Activated CD4-positive, alpha-beta T cell treated with anti-CD3 and anti-CD28 coated beads for 36 hours (primary cell): ENCODE measurements at regions of chr2 and their contacts with region 1.

Region 1: DNA sequence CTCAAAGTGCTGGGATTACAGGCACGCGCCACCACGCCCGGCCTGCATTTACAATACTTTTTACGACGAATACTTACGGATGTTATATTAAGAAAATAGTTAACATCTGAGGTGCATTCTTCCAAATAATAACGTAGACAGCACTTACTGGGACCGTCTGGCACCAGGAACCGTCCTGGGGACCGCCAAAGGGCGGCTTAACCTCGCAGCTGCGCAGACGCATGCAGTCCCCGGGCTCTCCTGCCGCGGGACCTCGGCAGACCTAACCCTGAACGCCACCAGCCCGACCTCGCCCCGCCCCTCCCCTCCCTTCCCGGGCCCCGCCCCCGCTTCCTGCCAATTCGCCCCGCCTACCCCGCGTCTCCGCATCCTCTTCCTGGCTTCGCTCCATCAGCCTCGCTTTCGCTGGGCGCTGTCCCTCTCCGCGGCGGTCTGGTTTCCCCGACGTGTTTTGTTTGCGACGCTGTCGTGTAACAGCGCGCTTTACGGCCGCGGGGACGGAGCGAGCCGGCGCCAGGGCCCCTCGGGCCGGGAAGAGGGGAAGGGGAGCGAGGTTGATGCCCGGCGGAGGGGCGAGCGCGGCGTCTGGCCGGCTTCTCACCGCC is at the start of gene CNOT11:
- DNase-seq: peak; percentile 100
- ATAC-seq: peak; percentile 88
- H3K4me3 Mint-ChIP-seq: peak within 1 kb of the TSS; percentile 90
- H3K27ac Mint-ChIP-seq: peak within 1 kb of the TSS; percentile 95
- H3K4me1 Mint-ChIP-seq: peaks cover 42% of the 10 kb centered on the region
- H3K27me3 Mint-ChIP-seq: no peaks in the 10 kb centered on the region
- total RNA-seq, gene CNOT11: 57.9 to 106 TPM

Region 2: DNA sequence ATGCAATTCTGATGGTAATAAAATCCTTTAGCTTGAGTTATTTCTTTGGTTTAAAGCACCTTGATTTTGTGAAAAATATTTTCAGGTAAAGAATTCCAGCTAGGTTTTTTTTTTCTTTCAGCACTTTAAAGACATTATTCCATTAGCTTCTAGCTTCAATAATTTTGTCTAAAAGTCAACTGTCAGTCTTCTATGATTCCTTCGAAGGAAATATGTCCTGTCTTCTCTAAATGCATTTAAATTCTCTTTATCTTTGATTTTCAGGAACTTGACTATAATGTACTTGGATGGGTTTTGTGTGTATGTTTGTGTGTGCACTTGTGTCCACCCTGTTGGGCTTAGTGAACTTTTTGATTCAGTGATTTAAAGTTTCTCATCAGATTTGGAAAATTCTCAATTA is 934.9 kb before region 1 on chr2:
- CTCF ChIA-PET with region 1: no interaction called
- POLR2A ChIA-PET with region 1: no interaction called
- intact Hi-C with region 1: no loop called
- DNase-seq: no peak
- ATAC-seq: no peak
- H3K4me3 Mint-ChIP-seq: no peak overlapping the region
- H3K27ac Mint-ChIP-seq: no peak overlapping the region
- H3K4me1 Mint-ChIP-seq: no peaks in the 10 kb centered on the region
- H3K27me3 Mint-ChIP-seq: peaks cover 38% of the 10 kb centered on the region

Region 3: GRCh38 chr2:100562732-100563720 is 689.5 kb before region 1 on chr2 and contains the start of gene PDCL3:
- CTCF ChIA-PET with region 1: no interaction called
- POLR2A ChIA-PET with region 1: no interaction called
- intact Hi-C with region 1: loop called in 1 of 2 experiments (anchors 1 kb)
- DNase-seq: peak; percentile 96
- ATAC-seq: peak; percentile 96
- H3K4me3 Mint-ChIP-seq: peak within 1 kb of the TSS; percentile 85
- H3K27ac Mint-ChIP-seq: peak within 1 kb of the TSS; percentile 97
- H3K4me1 Mint-ChIP-seq: peaks cover 26% of the 10 kb centered on the region
- H3K27me3 Mint-ChIP-seq: no peaks in the 10 kb centered on the region
- total RNA-seq, gene PDCL3: 39.3 to 41.9 TPM

Region 4: GRCh38 chr2:101012706-101013181 is 239.8 kb before region 1 on chr2:
- CTCF ChIA-PET with region 1: interaction called, 5 read pairs
- POLR2A ChIA-PET with region 1: no interaction called
- intact Hi-C with region 1: loop called in 1 of 2 experiments (anchors 1 kb)
- DNase-seq: peak; percentile 49
- ATAC-seq: no peak
- H3K4me3 Mint-ChIP-seq: no peak overlapping the region
- H3K27ac Mint-ChIP-seq: peak overlapping the region; percentile 55
- H3K4me1 Mint-ChIP-seq: peaks cover 31% of the 10 kb centered on the region
- H3K27me3 Mint-ChIP-seq: no peaks in the 10 kb centered on the region

Region 5: GRCh38 chr2:101238930-101239759 is 13.4 kb before region 1 on chr2:
- CTCF ChIA-PET with region 1: interaction called, 10 read pairs
- POLR2A ChIA-PET with region 1: no interaction called
- intact Hi-C with region 1: no loop called
- DNase-seq: no peak
- ATAC-seq: no peak
- H3K4me3 Mint-ChIP-seq: no peak overlapping the region
- H3K27ac Mint-ChIP-seq: no peak overlapping the region
- H3K4me1 Mint-ChIP-seq: peaks cover 6% of the 10 kb centered on the region
- H3K27me3 Mint-ChIP-seq: no peaks in the 10 kb centered on the region

Region 6: DNA sequence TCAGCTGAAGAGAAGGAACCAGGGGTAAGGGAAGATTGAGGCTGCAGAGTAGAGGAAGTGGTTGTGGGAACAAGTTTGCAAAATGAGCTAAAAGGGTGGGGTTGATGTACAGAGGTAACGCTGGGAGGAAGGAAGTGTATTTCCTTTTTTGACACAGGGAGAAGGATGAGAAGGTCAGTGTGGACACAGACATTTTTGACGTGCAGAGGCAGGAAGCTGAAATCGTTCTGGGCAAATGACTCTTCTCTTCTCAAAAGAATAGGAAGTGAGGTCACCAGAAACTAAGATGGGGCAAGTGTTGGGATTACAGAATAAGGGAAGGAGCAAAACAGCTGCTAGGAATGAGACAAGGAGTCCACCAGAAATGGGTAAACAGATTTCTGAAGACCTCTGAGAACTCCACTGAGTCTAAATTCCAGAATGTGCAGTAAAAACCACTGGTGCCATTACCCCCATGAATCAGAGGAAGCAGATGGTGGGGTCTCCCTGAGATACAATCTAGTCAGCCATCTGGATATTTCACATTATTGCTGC is 76.0 kb after region 1 on chr2:
- CTCF ChIA-PET with region 1: interaction called, 5 read pairs
- POLR2A ChIA-PET with region 1: no interaction called
- intact Hi-C with region 1: loop called in 1 of 2 experiments (anchors 2 kb)
- DNase-seq: no peak
- ATAC-seq: peak; percentile 80
- H3K4me3 Mint-ChIP-seq: no peak overlapping the region
- H3K27ac Mint-ChIP-seq: no peak overlapping the region
- H3K4me1 Mint-ChIP-seq: peaks cover 20% of the 10 kb centered on the region
- H3K27me3 Mint-ChIP-seq: no peaks in the 10 kb centered on the region

Region 7: DNA sequence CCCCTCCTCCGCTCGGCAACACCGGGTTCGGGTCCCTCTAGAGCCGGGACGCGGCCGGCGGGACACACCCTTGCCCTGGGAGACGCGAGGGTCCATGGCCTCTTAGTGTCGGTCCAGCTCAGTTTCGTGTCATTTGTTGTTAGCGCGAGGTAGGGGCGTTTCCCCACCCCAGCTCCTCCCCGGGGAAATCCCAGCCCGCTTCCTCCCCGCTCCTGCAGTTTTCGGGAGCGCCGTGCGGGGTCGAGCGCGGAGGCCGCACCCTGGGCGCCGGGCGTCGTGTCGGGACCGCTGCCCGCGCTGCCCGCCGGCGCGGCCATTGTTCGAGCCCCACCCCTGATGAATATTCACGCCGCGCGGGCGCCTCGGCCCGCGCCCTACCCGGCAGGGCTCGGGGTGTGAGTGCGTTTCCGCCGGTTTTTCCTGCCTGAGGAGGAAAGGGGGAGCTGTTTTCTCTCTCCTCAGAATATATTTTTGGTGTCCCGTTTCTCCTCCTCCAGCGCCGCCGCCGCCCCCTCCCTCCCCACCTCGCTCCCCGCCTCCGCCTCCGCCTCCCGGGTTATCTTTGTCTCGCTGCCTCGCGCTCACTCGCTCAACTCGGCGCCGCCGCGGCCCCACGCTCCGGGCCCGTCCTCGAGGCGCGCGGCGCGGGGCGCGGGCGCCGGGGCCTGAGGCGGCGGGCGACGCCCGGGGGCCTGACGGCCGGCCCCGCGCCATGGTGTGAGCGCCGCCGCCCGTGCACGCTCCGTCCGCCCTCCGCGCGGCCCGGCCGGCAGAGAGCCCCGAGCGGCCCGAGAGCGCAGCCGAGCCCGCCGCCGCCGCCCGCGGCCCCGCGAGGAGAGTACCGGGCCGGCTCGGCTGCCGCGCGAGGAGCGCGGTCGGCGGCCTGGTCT is 444.9 kb after region 1 on chr2 and contains the start of gene MAP4K4:
- CTCF ChIA-PET with region 1: no interaction called
- POLR2A ChIA-PET with region 1: no interaction called
- intact Hi-C with region 1: loop called in 1 of 2 experiments (anchors 5 kb)
- DNase-seq: peak; percentile 85
- ATAC-seq: peak; percentile 52
- H3K4me3 Mint-ChIP-seq: no peak within 1 kb of the TSS
- H3K27ac Mint-ChIP-seq: peak within 1 kb of the TSS; percentile 68
- H3K4me1 Mint-ChIP-seq: peaks cover 30% of the 10 kb centered on the region
- H3K27me3 Mint-ChIP-seq: no peaks in the 10 kb centered on the region
- total RNA-seq, gene MAP4K4: 62.3 to 70.2 TPM

Region 8: GRCh38 chr2:101831351-101831865 is 578.9 kb after region 1 on chr2:
- CTCF ChIA-PET with region 1: no interaction called
- POLR2A ChIA-PET with region 1: no interaction called
- intact Hi-C with region 1: loop called in 1 of 2 experiments (anchors 5 kb)
- DNase-seq: peak; percentile 79
- ATAC-seq: peak; percentile 56
- H3K4me3 Mint-ChIP-seq: no peak overlapping the region
- H3K27ac Mint-ChIP-seq: peak overlapping the region; percentile 78
- H3K4me1 Mint-ChIP-seq: peaks cover 56% of the 10 kb centered on the region
- H3K27me3 Mint-ChIP-seq: no peaks in the 10 kb centered on the region